ENCODE measurements at regions of chr1 and their contacts with region 1.

Region 1: DNA sequence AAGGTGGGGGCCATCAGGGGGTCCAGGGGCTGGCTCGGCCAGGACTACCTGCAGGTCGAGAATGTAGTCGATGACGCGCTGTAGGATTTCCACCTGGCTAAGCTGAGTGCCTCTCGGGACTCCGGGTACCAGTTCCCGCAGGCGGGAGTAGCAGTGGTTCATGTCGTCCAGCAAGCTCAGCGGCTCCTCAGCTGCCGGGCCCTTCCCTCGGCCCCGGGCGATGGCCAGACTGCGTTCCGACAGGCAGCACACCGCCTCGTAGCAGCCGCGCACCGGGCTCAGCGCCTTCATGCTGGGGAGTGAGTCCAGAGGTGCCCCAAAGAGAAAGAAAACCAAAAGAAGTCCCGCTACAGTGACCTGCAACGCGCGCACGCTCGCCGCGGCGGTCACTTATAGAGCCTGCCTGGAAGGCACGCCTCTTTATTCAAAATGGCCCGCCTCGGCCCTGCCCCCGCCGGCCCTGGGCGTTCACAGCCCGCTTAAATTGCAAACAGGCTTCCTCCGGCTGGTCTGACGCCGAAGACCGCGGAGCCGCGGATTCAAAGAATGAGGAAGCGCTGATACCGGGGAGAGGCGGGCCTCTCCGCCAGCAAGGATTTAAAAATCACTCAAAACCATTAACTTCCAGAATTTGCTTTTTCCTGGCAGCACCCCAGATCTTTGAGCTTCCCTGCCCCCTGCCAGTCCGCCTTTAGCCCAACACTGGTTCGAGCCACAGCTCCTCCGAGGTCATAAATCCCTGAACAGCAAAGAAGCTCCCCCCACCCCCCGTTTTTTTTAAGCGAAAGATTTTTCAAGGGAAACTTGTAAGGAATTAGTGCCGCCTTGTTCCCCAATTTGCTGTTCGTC is at the start of gene ID3:
- DNase-seq: peak; percentile 97
- ATAC-seq: peak; percentile 73
- H3K4me3 ChIP-seq: peak within 1 kb of the TSS; percentile 87 to 100 (median 95)
- H3K4me3 Mint-ChIP-seq: peak within 1 kb of the TSS; percentile 93
- H3K27ac ChIP-seq: peak within 1 kb of the TSS; percentile 83 to 91
- H3K27ac Mint-ChIP-seq: peak within 1 kb of the TSS; percentile 94
- H3K4me1 ChIP-seq: peaks cover 66 to 75% of the 10 kb centered on the region in 2 donors
- H3K4me1 Mint-ChIP-seq: peaks cover 72% of the 10 kb centered on the region
- H3K27me3 ChIP-seq: no peaks in the 10 kb centered on the region
- H3K27me3 Mint-ChIP-seq: no peaks in the 10 kb centered on the region
- CTCF ChIP-seq: no peak
- total RNA-seq, gene ID3: 367 and 370 TPM in 2 replicates

Region 2: DNA sequence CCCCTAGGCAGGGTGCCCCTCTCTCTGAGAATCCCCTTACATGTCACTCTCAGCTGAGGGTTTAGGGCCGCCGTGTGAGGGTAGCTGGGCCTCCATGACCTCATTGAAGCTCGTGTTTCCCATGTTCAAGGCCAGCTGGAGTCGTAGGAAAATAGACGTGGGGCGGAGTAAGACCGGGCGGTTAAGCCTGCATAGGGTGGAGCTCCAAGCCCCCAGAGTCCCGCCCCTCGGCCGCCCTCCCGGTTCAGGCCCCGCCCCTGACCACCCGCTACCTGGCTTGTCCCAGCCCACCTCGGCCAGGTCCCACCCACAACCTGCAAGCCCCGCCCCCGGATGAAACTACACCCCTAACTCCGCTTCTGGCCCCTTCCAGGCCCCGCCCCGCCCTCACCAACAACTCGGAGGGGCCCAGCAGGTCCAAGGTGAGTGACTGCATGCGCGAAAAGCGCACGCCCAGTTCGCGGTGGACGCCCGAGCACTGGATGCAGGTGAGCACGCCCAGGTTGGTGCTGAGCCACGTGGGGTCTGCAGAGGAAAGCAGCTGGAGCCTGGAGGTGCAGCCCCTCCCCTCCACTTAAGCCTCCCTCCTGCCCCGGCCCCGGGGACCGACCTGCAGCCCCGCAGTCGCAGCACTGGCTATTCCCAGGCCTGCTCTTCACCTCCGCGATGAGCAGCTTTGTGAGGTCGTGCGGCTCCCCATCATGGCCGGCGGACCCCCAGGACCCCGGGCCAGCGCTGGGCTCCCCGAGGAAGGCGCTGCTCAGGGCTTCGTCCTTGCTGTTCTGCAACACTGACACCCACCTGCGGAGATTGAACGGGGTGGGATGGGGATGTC is 122.6 kb before region 1 on chr1:
- CTCF ChIA-PET with region 1: no interaction called
- POLR2A ChIA-PET with region 1: no interaction called
- intact Hi-C with region 1: no loop called
- DNase-seq: peak; percentile 36
- ATAC-seq: peak; percentile 49
- H3K4me3 ChIP-seq: no peak overlapping the region
- H3K4me3 Mint-ChIP-seq: no peak overlapping the region
- H3K27ac ChIP-seq: no peak overlapping the region
- H3K27ac Mint-ChIP-seq: no peak overlapping the region
- H3K4me1 ChIP-seq: no peaks in the 10 kb centered on the region
- H3K4me1 Mint-ChIP-seq: no peaks in the 10 kb centered on the region
- H3K27me3 ChIP-seq: peaks cover 0 to 2% (median 0%) of the 10 kb centered on the region in 4 experiments
- H3K27me3 Mint-ChIP-seq: peaks cover 9% of the 10 kb centered on the region
- CTCF ChIP-seq: no peak

Region 3: GRCh38 chr1:23577056-23578004 is 18.0 kb after region 1 on chr1:
- CTCF ChIA-PET with region 1: interaction called, 179 read pairs
- POLR2A ChIA-PET with region 1: interaction called, 165 read pairs
- intact Hi-C with region 1: loop called (anchors 1 kb)
- DNase-seq: peak; percentile 80
- ATAC-seq: peak; percentile 85
- H3K4me3 ChIP-seq: peak overlapping the region in 4 of 5 experiments; percentile 13 to 53 (median 20)
- H3K4me3 Mint-ChIP-seq: peak overlapping the region; percentile 83
- H3K27ac ChIP-seq: peak overlapping the region; percentile 75 to 83
- H3K27ac Mint-ChIP-seq: peak overlapping the region; percentile 98
- H3K4me1 ChIP-seq: peaks cover 78 to 85% of the 10 kb centered on the region in 2 donors
- H3K4me1 Mint-ChIP-seq: peaks cover 85% of the 10 kb centered on the region
- H3K27me3 ChIP-seq: no peaks in the 10 kb centered on the region
- H3K27me3 Mint-ChIP-seq: no peaks in the 10 kb centered on the region
- CTCF ChIP-seq: no peak

Region 4: GRCh38 chr1:23598424-23598823 is 39.1 kb after region 1 on chr1:
- CTCF ChIA-PET with region 1: interaction called, 227 read pairs
- POLR2A ChIA-PET with region 1: interaction called, 164 read pairs
- intact Hi-C with region 1: no loop called
- DNase-seq: no peak
- ATAC-seq: no peak
- H3K4me3 ChIP-seq: no peak overlapping the region
- H3K4me3 Mint-ChIP-seq: no peak overlapping the region
- H3K27ac ChIP-seq: peak overlapping the region; percentile 32 to 61
- H3K27ac Mint-ChIP-seq: peak overlapping the region; percentile 65
- H3K4me1 ChIP-seq: peaks cover 92 to 96% of the 10 kb centered on the region in 2 donors
- H3K4me1 Mint-ChIP-seq: peaks cover 87% of the 10 kb centered on the region
- H3K27me3 ChIP-seq: no peaks in the 10 kb centered on the region
- H3K27me3 Mint-ChIP-seq: no peaks in the 10 kb centered on the region
- CTCF ChIP-seq: no peak

Region 5: GRCh38 chr1:23619299-23620188 is 60.2 kb after region 1 on chr1:
- CTCF ChIA-PET with region 1: interaction called, 36 read pairs
- POLR2A ChIA-PET with region 1: interaction called, 110 read pairs
- intact Hi-C with region 1: loop called (anchors 1 kb)
- DNase-seq: peak; percentile 89
- ATAC-seq: peak; percentile 88
- H3K4me3 ChIP-seq: peak overlapping the region in 4 of 5 experiments; percentile 29 to 59 (median 50)
- H3K4me3 Mint-ChIP-seq: peak overlapping the region; percentile 82
- H3K27ac ChIP-seq: peak overlapping the region; percentile 93 to 94
- H3K27ac Mint-ChIP-seq: peak overlapping the region; percentile 98
- H3K4me1 ChIP-seq: peaks cover 77 to 93% of the 10 kb centered on the region in 2 donors
- H3K4me1 Mint-ChIP-seq: peaks cover 87% of the 10 kb centered on the region
- H3K27me3 ChIP-seq: no peaks in the 10 kb centered on the region
- H3K27me3 Mint-ChIP-seq: no peaks in the 10 kb centered on the region
- CTCF ChIP-seq: no peak

Region 6: GRCh38 chr1:23727362-23727827 is 168.0 kb after region 1 on chr1:
- CTCF ChIA-PET with region 1: no interaction called
- POLR2A ChIA-PET with region 1: no interaction called
- intact Hi-C with region 1: loop called (anchors 10 kb)
- DNase-seq: no peak
- ATAC-seq: no peak
- H3K4me3 ChIP-seq: peak overlapping the region in 1 of 5 experiments; percentile 0
- H3K4me3 Mint-ChIP-seq: peak overlapping the region; percentile 70
- H3K27ac ChIP-seq: peak overlapping the region; percentile 82 to 87
- H3K27ac Mint-ChIP-seq: peak overlapping the region; percentile 95
- H3K4me1 ChIP-seq: peaks cover 50 to 66% of the 10 kb centered on the region in 2 donors
- H3K4me1 Mint-ChIP-seq: peaks cover 56% of the 10 kb centered on the region
- H3K27me3 ChIP-seq: no peaks in the 10 kb centered on the region
- H3K27me3 Mint-ChIP-seq: no peaks in the 10 kb centered on the region
- CTCF ChIP-seq: no peak

Measured in B cell (primary cell).